ENCODE measurements at regions of chr2 and their contacts with region 1.

Region 1: GRCh38 chr2:108226564-108226963 is 13.2 kb upstream of the SULT1C3 start:
- DNase-seq: no peak
- H3K4me3 ChIP-seq: no peak overlapping the region
- CTCF ChIP-seq: no peak
- POLR2A ChIP-seq: no peak

Region 2: GRCh38 chr2:108243566-108243965 is 17.0 kb after region 1 on chr2:
- intact Hi-C with region 1: loop called (anchors 2 kb)
- DNase-seq: no peak
- H3K4me3 ChIP-seq: no peak overlapping the region
- CTCF ChIP-seq: no peak
- POLR2A ChIP-seq: no peak